T-cell (primary cell): ENCODE measurements at regions of chr6 and their contacts with region 1.

Region 1: GRCh38 chr6:154276810-154277628 is 79.6 kb downstream of the IPCEF1 start:
- DNase-seq: peak in 3 of 35 experiments; percentile 13 to 78 (median 19)
- ATAC-seq: peak; percentile 76 to 82 (median 79)
- H3K4me3 ChIP-seq: peak overlapping the region; percentile 32
- H3K4me3 Mint-ChIP-seq: peak overlapping the region; percentile 66 to 70 (median 69)
- H3K27ac ChIP-seq: peak overlapping the region; percentile 15
- H3K27ac Mint-ChIP-seq: peak overlapping the region; percentile 75 to 78
- H3K4me1 ChIP-seq: peaks cover 15 to 16% of the 10 kb centered on the region in 2 experiments
- H3K4me1 Mint-ChIP-seq: peaks cover 38 to 44% (median 43%) of the 10 kb centered on the region in 3 donors
- H3K27me3 ChIP-seq: no peaks in the 10 kb centered on the region
- H3K27me3 Mint-ChIP-seq: no peaks in the 10 kb centered on the region

Region 2: GRCh38 chr6:154156135-154156896 is 120.7 kb before region 1 on chr6:
- CTCF ChIA-PET with region 1: interaction called, 43 to 66 read pairs
- POLR2A ChIA-PET with region 1: interaction called, 3 read pairs
- DNase-seq: peak; percentile 33 to 80 (median 56)
- ATAC-seq: peak; percentile 79 to 91 (median 84)
- H3K4me3 ChIP-seq: peak overlapping the region; percentile 31 to 32
- H3K4me3 Mint-ChIP-seq: peak overlapping the region; percentile 69 to 80 (median 76)
- H3K27ac ChIP-seq: peak overlapping the region; percentile 84
- H3K27ac Mint-ChIP-seq: peak overlapping the region; percentile 95 to 97
- H3K4me1 ChIP-seq: peaks cover 22 to 32% of the 10 kb centered on the region in 2 experiments
- H3K4me1 Mint-ChIP-seq: peaks cover 53 to 62% (median 60%) of the 10 kb centered on the region in 3 donors
- H3K27me3 ChIP-seq: no peaks in the 10 kb centered on the region
- H3K27me3 Mint-ChIP-seq: no peaks in the 10 kb centered on the region

Region 3: GRCh38 chr6:154218301-154218700 is 58.7 kb before region 1 on chr6:
- CTCF ChIA-PET with region 1: interaction called, 3 to 15 read pairs
- POLR2A ChIA-PET with region 1: no interaction called
- DNase-seq: peak in 1 of 35 experiments; percentile 23
- ATAC-seq: peak in 2 of 4 experiments; percentile 43 to 62
- H3K4me3 ChIP-seq: no peak overlapping the region
- H3K4me3 Mint-ChIP-seq: peak overlapping the region in 2 of 3 donors; percentile 25 to 76
- H3K27ac ChIP-seq: no peak overlapping the region
- H3K27ac Mint-ChIP-seq: peak overlapping the region; percentile 87 to 91
- H3K4me1 ChIP-seq: peaks cover 24 to 44% of the 10 kb centered on the region in 2 experiments
- H3K4me1 Mint-ChIP-seq: peaks cover 43 to 64% (median 60%) of the 10 kb centered on the region in 3 donors
- H3K27me3 ChIP-seq: no peaks in the 10 kb centered on the region
- H3K27me3 Mint-ChIP-seq: no peaks in the 10 kb centered on the region

Region 4: DNA sequence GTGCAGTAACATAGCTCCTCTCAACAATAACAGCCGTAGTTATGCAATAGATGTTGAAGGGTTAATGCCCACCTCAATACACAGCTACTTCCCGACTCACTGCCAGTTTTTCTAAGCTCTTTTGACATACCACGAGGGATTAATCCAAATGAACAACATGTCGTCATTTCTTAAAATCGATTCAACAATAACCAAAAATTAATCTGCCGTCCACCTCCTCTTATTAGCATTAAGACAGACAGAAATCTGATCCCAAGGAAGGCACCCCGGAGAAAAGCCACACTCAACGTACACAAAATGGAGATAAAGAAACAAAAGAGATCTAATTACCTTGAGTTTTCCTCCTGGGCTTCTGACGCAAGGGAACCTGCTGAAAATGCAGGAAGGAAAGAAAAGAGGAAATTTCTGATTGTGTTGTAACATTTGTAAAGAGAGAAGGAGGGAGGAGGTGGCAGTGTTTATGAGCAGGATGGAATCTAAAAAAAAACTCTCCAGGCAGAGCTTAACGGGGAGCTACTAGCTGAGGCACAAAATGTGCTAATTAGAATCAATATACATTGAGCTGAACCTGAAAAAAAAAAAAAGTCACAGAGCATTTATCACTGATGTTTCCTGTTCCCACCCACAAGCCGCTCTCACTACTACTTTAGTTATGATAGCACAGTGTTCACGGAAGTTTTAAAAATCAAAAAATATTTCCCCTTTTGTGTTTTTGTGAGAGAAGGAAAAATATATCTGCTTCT is 29.7 kb before region 1 on chr6:
- CTCF ChIA-PET with region 1: interaction called, 6 to 29 read pairs
- POLR2A ChIA-PET with region 1: interaction called, 4 read pairs
- DNase-seq: peak in 19 of 35 experiments; percentile 15 to 66 (median 33)
- ATAC-seq: peak; percentile 43 to 56 (median 52)
- H3K4me3 ChIP-seq: peak overlapping the region; percentile 51 to 77
- H3K4me3 Mint-ChIP-seq: peak overlapping the region; percentile 92 to 96 (median 93)
- H3K27ac ChIP-seq: peak overlapping the region; percentile 88
- H3K27ac Mint-ChIP-seq: peak overlapping the region; percentile 93 to 97
- H3K4me1 ChIP-seq: peaks cover 48 to 64% of the 10 kb centered on the region in 2 experiments
- H3K4me1 Mint-ChIP-seq: peaks cover 70 to 95% (median 84%) of the 10 kb centered on the region in 3 donors
- H3K27me3 ChIP-seq: no peaks in the 10 kb centered on the region
- H3K27me3 Mint-ChIP-seq: no peaks in the 10 kb centered on the region

Region 5: GRCh38 chr6:154289863-154290508 is 13.0 kb after region 1 on chr6:
- CTCF ChIA-PET with region 1: interaction called in 1 of 2 experiments, 7 read pairs
- POLR2A ChIA-PET with region 1: interaction called in 1 of 2 experiments, 10 read pairs
- DNase-seq: no peak
- ATAC-seq: no peak
- H3K4me3 ChIP-seq: no peak overlapping the region
- H3K4me3 Mint-ChIP-seq: no peak overlapping the region
- H3K27ac ChIP-seq: no peak overlapping the region
- H3K27ac Mint-ChIP-seq: no peak overlapping the region
- H3K4me1 ChIP-seq: no peaks in the 10 kb centered on the region
- H3K4me1 Mint-ChIP-seq: no peaks in the 10 kb centered on the region
- H3K27me3 ChIP-seq: no peaks in the 10 kb centered on the region
- H3K27me3 Mint-ChIP-seq: no peaks in the 10 kb centered on the region